ENCODE measurements at regions of chr10 and their contacts with region 1.

Region 1: DNA sequence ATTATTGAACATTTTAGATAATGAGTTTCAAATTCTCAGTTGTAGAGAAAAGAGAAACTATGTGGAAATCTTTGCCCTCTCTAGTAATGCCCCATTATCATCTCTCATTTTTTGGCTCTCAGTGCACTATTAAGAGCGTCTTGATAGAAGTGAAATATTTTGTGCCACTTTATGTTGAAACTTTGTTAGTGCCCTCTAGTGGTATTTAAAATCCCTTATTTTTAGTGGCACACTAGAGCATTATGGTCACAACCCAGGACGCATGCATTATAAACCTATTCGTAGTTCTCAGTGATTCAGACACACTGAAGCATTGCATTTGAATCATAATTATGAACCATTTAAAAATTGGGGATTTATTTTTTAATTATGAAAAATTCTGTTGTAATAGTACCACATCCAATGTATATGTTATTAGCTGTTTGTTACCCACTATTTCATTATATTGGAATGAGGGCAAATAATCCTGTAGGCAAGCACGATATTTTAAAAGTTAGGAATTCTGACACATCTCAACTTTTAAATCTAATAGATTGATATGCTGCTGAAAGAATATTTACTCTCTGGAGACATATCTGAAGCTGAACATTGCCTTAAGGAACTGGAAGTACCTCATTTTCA is 21.9 kb downstream of the PDCD4 start:
- DNase-seq: no peak

Region 2: DNA sequence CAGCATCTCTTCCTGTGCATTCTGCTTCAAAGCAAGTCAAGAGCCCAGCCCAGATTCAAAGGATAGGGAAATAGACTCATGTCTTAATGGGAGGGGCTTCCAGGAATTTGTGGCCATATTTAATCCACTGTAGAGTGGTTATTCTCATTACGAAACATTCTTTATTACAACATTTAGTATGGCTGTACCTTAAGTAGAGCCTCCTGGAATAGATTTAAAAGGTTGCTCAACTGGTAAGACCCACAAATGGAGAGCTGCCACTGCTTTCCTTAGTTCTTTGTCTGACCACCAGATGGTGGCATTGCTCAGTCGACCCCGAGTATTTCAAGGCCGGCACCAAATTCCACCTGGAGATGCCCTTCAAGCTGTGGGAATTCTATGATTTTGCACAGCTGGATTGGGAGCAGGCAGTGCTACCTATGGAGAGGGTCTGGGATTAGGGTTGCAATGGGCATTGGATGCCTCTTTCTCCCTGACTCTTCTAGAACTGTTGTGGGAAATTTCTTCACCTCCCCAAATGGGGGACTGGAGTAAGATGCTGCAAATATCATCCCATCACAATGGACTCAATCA is 147.3 kb before region 1 on chr10:
- intact Hi-C with region 1: loop called (anchors 10 kb)
- DNase-seq: peak; percentile 32 to 89 (median 68)

Region 3: GRCh38 chr10:110805350-110805749 is 88.3 kb before region 1 on chr10:
- intact Hi-C with region 1: loop called (anchors 5 kb)
- DNase-seq: no peak

Region 4: GRCh38 chr10:110923856-110924493 is 30.3 kb after region 1 on chr10:
- intact Hi-C with region 1: no loop called
- DNase-seq: no peak